ENCODE measurements at regions of chr5 and their contacts with region 1.

Region 1: GRCh38 chr5:54658014-54658413 is 140.5 kb downstream of the SNX18 start:
- DNase-seq: no peak

Region 2: GRCh38 chr5:54703133-54703532 is 45.1 kb after region 1 on chr5:
- intact Hi-C with region 1: loop called (anchors 5 kb)
- DNase-seq: no peak

Measured in cardiac septum (tissue), 1 donor.